Colonic mucosa (tissue), 4 donors: ENCODE measurements at regions of chr18 and their contacts with region 1.

Region 1: GRCh38 chr18:46601141-46601805 is 55.7 kb downstream of the LOXHD1 start:
- DNase-seq: no peak
- H3K4me3 ChIP-seq: no peak overlapping the region
- H3K27ac ChIP-seq: no peak overlapping the region
- H3K4me1 ChIP-seq: no peaks in the 10 kb centered on the region
- H3K27me3 ChIP-seq: no peaks in the 10 kb centered on the region
- CTCF ChIP-seq: no peak

Region 2: DNA sequence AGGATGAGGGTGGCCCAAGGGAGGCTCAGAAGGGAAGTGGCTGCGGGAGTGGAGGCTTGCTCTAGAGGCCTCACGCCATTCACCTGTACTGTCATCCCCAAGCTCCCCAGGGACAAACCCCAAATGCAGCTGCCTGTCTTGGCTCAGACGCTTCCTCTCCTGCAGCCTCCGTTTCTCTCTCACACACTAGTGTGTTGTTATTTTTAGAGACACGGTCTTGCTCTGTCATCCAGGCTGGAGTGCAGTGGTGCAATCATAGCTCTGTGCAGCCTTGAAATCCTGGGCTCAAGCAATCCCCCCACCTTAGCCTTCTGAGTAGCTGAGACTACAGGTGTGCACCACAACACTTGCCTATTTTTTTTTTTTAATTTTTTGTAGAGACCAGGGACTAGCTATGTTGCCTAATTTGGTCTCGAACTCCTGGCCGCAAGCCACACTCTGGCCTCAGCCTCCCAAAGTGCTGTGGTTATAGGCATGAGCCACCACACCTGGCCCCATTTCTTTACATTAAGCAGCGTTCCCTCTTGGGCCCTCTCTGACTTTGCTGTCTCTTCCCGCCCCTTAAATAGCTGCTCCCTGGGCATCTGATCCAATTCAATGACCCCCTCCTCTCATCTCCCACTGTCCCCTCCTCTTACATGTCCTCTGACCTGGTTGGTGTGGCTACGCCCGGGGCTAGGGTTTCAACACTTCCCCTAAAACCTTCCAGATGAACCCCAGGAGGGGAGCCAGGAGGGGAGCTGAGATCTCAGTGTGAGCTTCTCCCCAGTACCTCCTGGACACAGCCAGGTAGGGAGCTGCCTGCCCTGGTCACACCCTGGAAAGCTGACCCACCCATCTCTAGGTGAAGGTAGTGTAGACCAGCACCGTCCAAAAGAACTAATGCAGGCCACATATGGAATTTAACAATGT is 79.8 kb after region 1 on chr18:
- intact Hi-C with region 1: loop called (anchors 10 kb)
- DNase-seq: no peak
- H3K4me3 ChIP-seq: no peak overlapping the region
- H3K27ac ChIP-seq: no peak overlapping the region
- H3K4me1 ChIP-seq: no peaks in the 10 kb centered on the region
- H3K27me3 ChIP-seq: no peaks in the 10 kb centered on the region
- CTCF ChIP-seq: no peak